PC-3 (cell line): ENCODE measurements at regions of chr3 and their contacts with region 1.

Region 1: DNA sequence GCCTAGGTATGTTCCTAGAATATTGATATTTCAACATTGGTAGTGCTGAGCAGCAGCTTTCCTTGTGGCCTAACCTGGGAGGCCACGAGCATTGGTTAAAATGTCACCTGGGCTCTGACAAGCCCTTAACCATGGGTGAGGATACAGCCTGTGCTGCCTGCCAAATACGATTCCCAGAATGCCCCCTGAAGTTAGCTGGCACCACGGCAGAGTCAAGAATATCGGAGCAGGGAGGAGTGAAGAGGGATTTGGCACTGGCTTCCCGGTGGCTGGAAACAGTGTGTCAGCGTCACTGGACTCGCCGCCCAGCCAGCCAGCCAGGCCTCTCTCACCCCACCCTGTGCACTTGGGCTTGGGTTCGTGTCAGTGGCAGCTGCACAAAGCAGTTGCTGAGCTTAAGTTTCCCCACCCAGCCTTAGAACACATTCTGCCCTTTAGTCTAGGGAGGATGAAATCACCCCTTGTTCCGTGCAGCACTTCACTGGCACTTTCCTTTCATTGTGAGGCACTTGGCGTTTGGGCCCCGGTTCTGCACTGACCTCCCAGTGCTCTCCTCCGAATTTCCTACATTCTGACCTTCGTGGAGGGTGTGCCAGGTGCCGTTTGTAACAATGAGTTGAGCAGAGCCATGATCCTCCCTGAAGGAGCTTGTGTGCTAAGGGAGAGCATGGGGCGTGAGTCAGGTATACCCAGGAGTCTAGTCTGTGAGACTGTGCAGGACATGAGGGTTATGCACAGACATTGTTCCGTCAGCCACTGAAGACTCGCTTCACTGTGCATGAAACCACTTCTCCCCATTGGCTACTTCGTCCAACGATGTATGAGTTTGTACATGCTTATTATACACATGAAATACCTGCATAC is 152.8 kb upstream of the BHLHE40 start:
- DNase-seq: no peak
- ATAC-seq: no peak
- H3K4me3 ChIP-seq: no peak overlapping the region
- H3K27ac ChIP-seq: peak overlapping the region; percentile 87
- H3K4me1 ChIP-seq: peaks cover 56% of the 10 kb centered on the region
- H3K27me3 ChIP-seq: no peaks in the 10 kb centered on the region
- CTCF ChIP-seq: no peak

Region 2: GRCh38 chr3:4741404-4742307 is 84.8 kb before region 1 on chr3:
- CTCF ChIA-PET with region 1: no interaction called
- POLR2A ChIA-PET with region 1: no interaction called
- intact Hi-C with region 1: loop called (anchors 5 kb)
- DNase-seq: peak; percentile 98
- ATAC-seq: peak; percentile 64
- H3K4me3 ChIP-seq: no peak overlapping the region
- H3K27ac ChIP-seq: peak overlapping the region; percentile 97
- H3K4me1 ChIP-seq: peaks cover 53% of the 10 kb centered on the region
- H3K27me3 ChIP-seq: no peaks in the 10 kb centered on the region
- CTCF ChIP-seq: no peak

Region 3: DNA sequence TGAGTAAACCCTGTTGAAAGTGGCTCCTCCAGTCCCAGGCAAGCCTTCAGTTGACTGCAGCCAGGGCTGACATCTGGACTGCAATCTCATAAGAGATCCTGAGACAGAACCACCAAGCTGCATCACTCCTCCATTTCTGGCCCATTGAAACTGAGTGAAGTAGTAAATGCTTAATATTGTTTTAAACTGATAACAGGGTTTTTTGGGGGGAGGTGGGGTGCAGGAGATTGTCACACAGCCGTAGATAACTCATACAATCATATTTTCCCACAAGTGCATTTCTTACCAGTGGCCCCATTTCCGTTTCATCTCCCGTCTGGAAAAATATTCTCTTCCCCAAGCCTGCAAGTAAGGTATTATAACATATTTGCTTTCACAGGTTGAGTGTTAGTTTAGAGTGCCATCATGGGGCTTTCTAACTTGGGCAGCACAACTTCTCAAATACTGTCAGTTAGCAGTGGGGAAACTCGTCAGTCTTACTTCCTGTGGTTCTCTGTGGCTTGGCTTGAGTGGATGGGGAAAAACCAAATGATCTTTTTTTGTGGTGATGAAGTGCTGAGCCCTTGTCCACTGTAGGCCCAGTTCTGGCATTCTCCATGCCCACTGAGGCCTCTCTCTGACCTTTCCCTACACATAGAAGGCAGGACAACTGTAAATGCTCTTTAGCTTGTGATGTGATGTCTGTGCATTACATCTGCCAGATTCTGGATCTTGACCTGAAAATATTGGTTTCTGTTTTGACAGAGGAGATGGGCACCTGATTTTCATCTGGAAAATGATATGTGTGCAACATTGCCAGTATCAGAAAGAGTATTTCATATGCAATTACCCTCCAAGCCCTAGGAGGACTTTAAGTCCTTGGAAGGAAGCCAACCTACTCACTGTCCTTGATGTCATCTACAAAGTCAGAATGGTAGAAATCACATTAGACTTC is 62.7 kb after region 1 on chr3:
- CTCF ChIA-PET with region 1: interaction called, 3 read pairs
- POLR2A ChIA-PET with region 1: no interaction called
- intact Hi-C with region 1: loop called (anchors 5 kb)
- DNase-seq: peak; percentile 31
- ATAC-seq: no peak
- H3K4me3 ChIP-seq: no peak overlapping the region
- H3K27ac ChIP-seq: no peak overlapping the region
- H3K4me1 ChIP-seq: peaks cover 36% of the 10 kb centered on the region
- H3K27me3 ChIP-seq: no peaks in the 10 kb centered on the region
- CTCF ChIP-seq: no peak

Region 4: DNA sequence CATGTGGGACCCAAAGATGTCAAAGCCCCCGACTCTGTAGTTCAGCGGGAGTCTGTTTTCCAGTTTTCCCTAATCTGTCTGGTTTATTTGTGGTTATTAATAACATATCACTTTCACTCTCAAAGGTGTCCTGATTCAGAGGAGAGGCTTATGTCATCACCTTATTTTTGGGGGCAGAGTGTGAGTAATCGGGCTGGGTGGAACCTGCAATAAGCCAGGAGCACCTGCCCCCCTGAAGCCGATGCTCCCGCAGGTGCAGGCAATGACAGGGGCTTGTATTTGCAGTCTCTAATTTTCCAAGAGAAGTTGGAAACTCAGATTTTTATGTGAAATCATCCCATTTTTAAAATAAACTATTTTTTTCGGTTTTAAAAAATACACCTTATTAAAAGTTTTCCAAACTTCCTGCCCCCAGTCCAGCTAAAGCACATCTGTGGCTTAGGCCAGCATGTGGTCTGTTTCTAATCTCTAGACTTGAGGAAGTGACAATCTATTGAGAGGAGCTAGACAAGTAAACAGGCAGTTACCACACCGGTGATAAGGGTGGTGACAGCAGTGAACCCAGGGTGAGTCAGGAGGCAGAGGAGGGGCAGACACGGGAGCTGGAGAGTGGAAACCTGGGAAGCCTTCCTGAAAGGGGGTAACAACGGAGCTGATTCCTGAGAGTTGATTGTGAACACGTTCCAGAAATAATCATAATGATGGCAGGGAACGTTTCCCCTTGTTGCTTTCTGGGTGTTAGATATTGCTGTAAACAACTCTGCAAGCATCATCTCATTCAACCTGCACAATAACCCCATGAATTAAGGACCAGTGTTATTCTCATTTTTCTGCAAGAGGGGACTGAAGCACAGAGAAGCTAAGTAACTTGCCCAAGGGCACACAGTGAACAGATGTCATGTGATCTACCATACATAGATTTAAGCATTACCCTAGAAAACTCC is 190.0 kb after region 1 on chr3:
- CTCF ChIA-PET with region 1: no interaction called
- POLR2A ChIA-PET with region 1: no interaction called
- intact Hi-C with region 1: no loop called
- DNase-seq: peak; percentile 75
- ATAC-seq: peak; percentile 57
- H3K4me3 ChIP-seq: no peak overlapping the region
- H3K27ac ChIP-seq: peak overlapping the region; percentile 71
- H3K4me1 ChIP-seq: peaks cover 58% of the 10 kb centered on the region
- H3K27me3 ChIP-seq: no peaks in the 10 kb centered on the region
- CTCF ChIP-seq: no peak